ENCODE measurements at regions of chr11 and their contacts with region 1.

Region 1: DNA sequence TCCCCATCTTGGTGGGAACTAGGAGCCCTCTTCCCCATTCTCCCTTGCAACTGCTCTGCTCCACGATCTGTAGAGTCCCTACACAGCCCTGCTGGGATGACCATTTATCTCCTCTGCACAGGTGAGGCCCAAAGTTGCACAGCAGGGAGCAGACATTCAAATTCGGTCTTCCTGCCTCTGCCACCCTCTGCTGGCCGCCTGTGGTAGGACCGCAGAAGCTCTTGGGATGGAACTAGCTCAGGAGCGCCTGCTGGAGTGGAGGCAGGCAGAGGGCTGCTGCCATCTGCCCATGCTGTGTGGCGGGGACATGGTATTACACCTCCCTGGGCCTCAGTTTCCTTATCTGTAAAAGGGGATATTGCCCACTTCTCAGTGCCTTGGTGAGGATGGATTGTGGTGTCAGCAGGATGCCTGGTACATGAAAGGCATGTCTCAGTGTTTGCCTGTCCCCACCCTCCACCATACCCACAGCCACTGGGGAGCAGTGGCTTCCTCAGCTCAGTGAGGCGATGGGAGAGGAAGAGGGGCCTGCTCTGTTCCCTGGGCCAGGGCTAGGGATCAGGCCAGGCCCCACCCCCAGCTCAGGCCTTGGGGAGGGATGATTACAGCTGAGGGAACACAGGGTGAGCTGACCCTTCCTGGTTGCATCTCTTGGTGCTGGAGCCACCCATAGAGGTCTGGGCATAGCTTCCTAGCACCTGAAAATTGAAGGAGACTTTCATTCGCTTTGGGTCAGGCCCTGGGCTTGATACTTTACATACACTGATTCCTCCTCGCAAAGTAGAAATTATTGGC is 11.3 kb upstream of the OMP start:
- DNase-seq: peak; percentile 85 to 90
- ATAC-seq: peak; percentile 89 to 95
- H3K4me3 ChIP-seq: no peak overlapping the region
- H3K27ac ChIP-seq: no peak overlapping the region
- H3K4me1 ChIP-seq: peaks cover 6% of the 10 kb centered on the region; the same call in 1 of the 3 replicates
- CTCF ChIP-seq: peak; percentile 95
- EP300 ChIP-seq: no peak
- POLR2A ChIP-seq: no peak
- RAD21 ChIP-seq: peak; percentile 95 to 96

Region 2: DNA sequence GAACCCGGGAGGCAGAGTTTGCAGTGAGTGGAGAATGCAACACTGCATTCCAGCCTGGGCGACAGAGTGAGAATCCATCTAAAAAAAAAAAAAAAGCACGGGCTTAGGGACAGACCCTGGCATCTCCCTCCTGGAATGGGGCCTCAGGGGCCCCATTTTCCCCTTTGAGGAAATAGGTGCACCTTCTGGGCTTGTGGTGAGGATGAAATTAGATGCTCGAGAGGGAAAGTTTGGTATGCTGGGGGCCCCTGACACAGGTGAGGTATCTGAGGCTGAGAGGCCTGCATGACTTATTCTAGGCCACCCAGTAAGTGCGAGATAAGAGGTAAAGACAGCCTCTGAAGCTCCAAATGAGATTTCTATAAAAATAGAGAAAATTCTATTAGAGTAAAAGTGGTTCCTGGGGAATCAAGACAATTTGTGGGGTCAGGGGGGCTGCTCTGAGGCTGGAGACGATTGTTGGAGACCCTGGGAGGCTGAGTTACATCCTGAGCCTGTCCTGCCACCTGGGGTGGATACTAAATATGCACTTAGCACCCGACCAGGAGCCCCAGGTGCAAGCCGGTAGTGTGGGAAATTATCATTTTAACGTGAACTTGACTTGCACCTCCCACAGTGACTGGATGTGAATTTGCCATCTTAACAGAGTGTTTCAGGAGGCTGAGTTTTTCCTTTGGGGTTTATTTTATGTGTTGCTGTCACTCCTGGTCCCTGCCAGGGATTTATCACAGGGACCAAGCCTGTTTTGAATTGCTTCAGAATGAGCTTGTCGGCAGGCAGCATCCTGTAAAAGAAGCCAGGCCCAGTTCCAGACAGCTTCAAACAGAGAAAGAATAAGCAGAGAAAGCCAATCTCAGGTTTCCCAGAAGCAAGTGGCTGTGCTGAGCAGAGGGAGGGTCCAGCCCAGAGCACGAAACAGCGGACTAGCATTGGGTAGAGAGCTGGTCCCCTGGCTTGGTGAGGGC is 356.6 kb before region 1 on chr11:
- CTCF ChIA-PET with region 1: interaction called, 17 read pairs
- POLR2A ChIA-PET with region 1: no interaction called
- DNase-seq: no peak
- ATAC-seq: peak in 1 of 2 experiments; percentile 6; a peak in 2 of 6 replicates
- H3K4me3 ChIP-seq: no peak overlapping the region
- H3K27ac ChIP-seq: peak overlapping the region; percentile 77 to 79
- H3K4me1 ChIP-seq: peaks cover 24% of the 10 kb centered on the region
- CTCF ChIP-seq: no peak
- EP300 ChIP-seq: no peak
- POLR2A ChIP-seq: no peak
- RAD21 ChIP-seq: no peak

Region 3: GRCh38 chr11:76984747-76985146 is 106.6 kb before region 1 on chr11:
- CTCF ChIA-PET with region 1: no interaction called
- POLR2A ChIA-PET with region 1: no interaction called
- DNase-seq: no peak
- ATAC-seq: no peak
- H3K4me3 ChIP-seq: no peak overlapping the region
- H3K27ac ChIP-seq: no peak overlapping the region
- H3K4me1 ChIP-seq: no peaks in the 10 kb centered on the region
- CTCF ChIP-seq: no peak
- EP300 ChIP-seq: no peak
- POLR2A ChIP-seq: no peak
- RAD21 ChIP-seq: no peak

Region 4: GRCh38 chr11:77039491-77040400 is 51.6 kb before region 1 on chr11:
- CTCF ChIA-PET with region 1: interaction called, 60 read pairs
- POLR2A ChIA-PET with region 1: no interaction called
- DNase-seq: no peak
- ATAC-seq: peak; percentile 20 to 58; a peak in 3 of 6 replicates
- H3K4me3 ChIP-seq: no peak overlapping the region
- H3K27ac ChIP-seq: peak overlapping the region in 1 of 2 experiments; percentile 22; a peak in 1 of 6 replicates
- H3K4me1 ChIP-seq: peaks cover 28% of the 10 kb centered on the region
- CTCF ChIP-seq: peak; percentile 31; the same call in 2 of the 3 replicates
- EP300 ChIP-seq: no peak
- POLR2A ChIP-seq: no peak
- RAD21 ChIP-seq: peak; percentile 42 to 47; a peak in 4 of 5 replicates

Region 5: GRCh38 chr11:77073328-77074001 is 17.9 kb before region 1 on chr11:
- CTCF ChIA-PET with region 1: interaction called, 50 read pairs
- POLR2A ChIA-PET with region 1: no interaction called
- DNase-seq: peak; percentile 75 to 83
- ATAC-seq: peak; percentile 92
- H3K4me3 ChIP-seq: no peak overlapping the region
- H3K27ac ChIP-seq: peak overlapping the region; percentile 81 to 83
- H3K4me1 ChIP-seq: peaks cover 45% of the 10 kb centered on the region
- CTCF ChIP-seq: peak; percentile 37
- EP300 ChIP-seq: no peak
- POLR2A ChIP-seq: peak; percentile 29; the same call in 1 of the 2 replicates
- RAD21 ChIP-seq: peak; percentile 17 to 27; a peak in 1 of 5 replicates

Region 6: DNA sequence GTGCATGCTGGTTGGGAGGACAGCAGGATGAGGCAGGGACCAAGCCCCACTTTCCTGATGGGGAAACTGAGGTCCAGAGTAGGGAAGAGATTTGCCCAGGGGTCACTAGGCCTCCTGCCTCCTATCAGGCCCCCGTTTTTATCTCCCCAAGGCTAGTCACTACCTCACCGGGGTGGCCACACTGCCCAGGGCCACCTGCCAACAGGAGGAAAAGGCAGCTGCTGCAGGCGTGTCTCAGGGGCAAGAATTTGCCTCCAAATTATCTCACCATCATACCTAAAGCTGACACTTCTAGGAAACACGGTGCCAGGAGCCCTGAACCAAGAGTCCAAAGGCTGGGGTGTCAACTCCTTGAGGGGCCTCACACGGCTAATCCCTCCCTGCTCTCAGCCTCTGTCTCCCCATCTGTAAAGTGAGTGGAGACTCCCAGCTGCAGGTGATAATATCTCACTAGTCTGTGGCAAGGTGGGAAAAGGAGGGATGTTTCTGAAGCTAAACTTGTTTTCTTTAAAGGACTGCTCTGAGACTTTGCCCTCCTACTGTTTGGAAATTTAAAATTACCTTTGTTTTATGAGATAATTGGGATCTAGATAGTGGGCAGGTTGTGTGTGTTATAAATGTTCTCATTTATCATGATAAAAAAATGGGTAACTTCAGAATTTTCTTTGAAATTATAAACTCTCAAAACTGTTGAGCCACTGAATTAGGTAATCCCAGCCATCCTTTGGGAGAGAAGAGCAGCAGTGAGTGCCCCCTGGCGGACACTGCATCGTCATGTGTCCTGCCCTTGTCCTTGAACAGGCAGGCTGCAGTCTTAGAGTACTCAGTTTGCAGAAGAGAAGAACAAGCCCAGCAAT is 96.7 kb after region 1 on chr11:
- CTCF ChIA-PET with region 1: interaction called, 11 read pairs
- POLR2A ChIA-PET with region 1: no interaction called
- DNase-seq: peak; percentile 77 to 94
- ATAC-seq: peak; percentile 36 to 64; a peak in 3 of 6 replicates
- H3K4me3 ChIP-seq: no peak overlapping the region
- H3K27ac ChIP-seq: no peak overlapping the region
- H3K4me1 ChIP-seq: no peaks in the 10 kb centered on the region
- CTCF ChIP-seq: peak; percentile 93
- EP300 ChIP-seq: no peak
- POLR2A ChIP-seq: no peak
- RAD21 ChIP-seq: peak; percentile 78